OCI-LY7 (cell line): ENCODE measurements at regions of chr3 and their contacts with region 1.

Region 1: GRCh38 chr3:187902041-187902471 is 156.8 kb upstream of the BCL6 start:
- DNase-seq: peak; percentile 96
- H3K4me3 ChIP-seq: peak overlapping the region; percentile 59
- H3K27ac ChIP-seq: peak overlapping the region; percentile 100
- H3K4me1 ChIP-seq: peaks cover 98% of the 10 kb centered on the region
- CTCF ChIP-seq: no peak

Region 2: GRCh38 chr3:187000711-187001151 is 901.3 kb before region 1 on chr3:
- CTCF ChIA-PET with region 1: no interaction called
- POLR2A ChIA-PET with region 1: no interaction called
- intact Hi-C with region 1: loop called (anchors 5 kb)
- DNase-seq: peak; percentile 92
- H3K4me3 ChIP-seq: peak overlapping the region; percentile 77
- H3K27ac ChIP-seq: peak overlapping the region; percentile 98
- H3K4me1 ChIP-seq: peaks cover 72% of the 10 kb centered on the region
- CTCF ChIP-seq: no peak

Region 3: DNA sequence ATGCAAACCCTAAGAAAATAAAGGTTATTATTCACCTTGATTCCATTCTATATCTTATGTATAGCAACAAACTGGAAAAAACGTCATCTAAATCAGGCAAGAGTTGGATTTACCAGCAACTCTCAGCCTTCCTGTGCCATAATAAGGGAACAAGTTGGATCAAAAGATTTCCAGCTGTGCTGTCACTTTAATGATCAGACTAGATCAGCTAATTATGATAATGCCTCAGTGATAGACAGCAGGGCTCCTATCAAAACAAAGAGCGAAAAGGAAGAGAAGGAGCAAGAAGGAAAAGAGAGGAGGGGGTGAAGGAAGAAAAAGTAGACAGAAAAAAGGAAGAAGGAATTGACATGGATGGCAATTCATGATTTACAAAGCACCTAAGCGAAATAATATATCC is 120.0 kb before region 1 on chr3:
- CTCF ChIA-PET with region 1: no interaction called
- POLR2A ChIA-PET with region 1: no interaction called
- intact Hi-C with region 1: no loop called
- DNase-seq: no peak
- H3K4me3 ChIP-seq: no peak overlapping the region
- H3K27ac ChIP-seq: no peak overlapping the region
- H3K4me1 ChIP-seq: peaks cover 10% of the 10 kb centered on the region
- CTCF ChIP-seq: no peak

Region 4: DNA sequence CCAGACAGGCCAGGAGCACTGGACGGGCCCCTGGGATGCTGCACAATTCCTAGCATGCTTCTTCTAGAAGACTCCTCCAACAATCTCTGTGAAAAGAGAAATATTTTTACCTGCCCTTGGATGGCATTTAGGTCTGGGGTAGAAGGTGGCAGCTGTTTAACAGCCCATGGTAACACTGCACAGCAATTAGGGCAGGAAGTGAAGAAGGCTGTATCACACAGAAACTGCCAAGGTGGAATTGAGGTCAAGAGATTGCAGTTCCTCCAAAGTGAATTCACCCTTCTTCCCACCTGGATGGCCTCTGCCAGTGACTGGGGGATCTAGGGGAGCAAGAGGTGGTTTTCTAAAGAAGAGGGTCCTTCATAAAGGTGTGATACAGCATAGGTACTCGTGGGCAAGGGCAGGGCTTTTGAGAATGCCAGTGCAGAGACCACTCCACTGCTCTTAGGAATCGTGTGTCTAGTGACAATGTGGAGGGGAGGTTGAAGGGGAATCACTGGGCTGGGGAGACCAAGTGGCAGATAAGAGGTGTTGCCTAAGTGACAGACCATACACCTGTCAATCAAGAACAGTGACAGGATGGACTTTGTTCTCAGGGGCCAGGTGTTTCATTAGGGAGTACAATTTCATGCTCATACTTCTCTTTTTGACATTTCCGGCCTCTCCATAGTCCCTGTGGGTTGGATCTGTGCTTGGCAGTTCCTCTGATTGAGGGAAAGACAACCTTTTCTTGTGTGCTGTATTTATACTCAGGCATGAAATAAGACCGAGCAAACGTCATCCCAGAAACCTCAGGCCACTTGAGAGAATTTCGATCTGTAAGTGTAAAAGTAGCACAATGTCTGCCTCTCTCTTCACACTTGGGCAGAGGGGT is 73.2 kb before region 1 on chr3:
- CTCF ChIA-PET with region 1: no interaction called
- POLR2A ChIA-PET with region 1: no interaction called
- intact Hi-C with region 1: no loop called
- DNase-seq: peak; percentile 89
- H3K4me3 ChIP-seq: peak overlapping the region; percentile 30
- H3K27ac ChIP-seq: peak overlapping the region; percentile 72
- H3K4me1 ChIP-seq: peaks cover 31% of the 10 kb centered on the region
- CTCF ChIP-seq: no peak

Region 5: DNA sequence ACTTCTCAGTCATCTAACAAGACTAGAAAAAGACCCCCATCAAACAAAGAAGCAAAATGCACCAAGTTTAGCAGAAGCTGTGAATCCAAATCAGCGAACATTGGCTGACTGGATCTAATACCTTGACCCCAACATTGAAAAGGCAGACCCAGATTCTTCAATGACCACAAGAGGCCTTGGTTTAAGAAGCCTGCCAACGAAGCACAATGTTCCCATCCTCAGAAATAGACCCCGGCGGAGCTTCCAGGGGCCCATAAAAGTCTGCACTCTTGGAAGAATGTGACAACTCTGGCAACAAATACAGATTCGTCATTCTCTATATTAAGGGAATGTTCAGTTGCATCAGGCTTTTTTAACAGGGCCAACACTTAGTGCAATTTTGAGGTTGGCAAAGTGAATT is 44.0 kb before region 1 on chr3:
- CTCF ChIA-PET with region 1: no interaction called
- POLR2A ChIA-PET with region 1: no interaction called
- intact Hi-C with region 1: no loop called
- DNase-seq: no peak
- H3K4me3 ChIP-seq: no peak overlapping the region
- H3K27ac ChIP-seq: no peak overlapping the region
- H3K4me1 ChIP-seq: no peaks in the 10 kb centered on the region
- CTCF ChIP-seq: no peak

Region 6: GRCh38 chr3:187889601-187890404 is 12.3 kb before region 1 on chr3:
- CTCF ChIA-PET with region 1: no interaction called
- POLR2A ChIA-PET with region 1: interaction called, 15 read pairs
- intact Hi-C with region 1: no loop called
- DNase-seq: peak; percentile 36
- H3K4me3 ChIP-seq: no peak overlapping the region
- H3K27ac ChIP-seq: no peak overlapping the region
- H3K4me1 ChIP-seq: peaks cover 8% of the 10 kb centered on the region
- CTCF ChIP-seq: no peak

Region 7: GRCh38 chr3:187919048-187919447 is 17.0 kb after region 1 on chr3:
- CTCF ChIA-PET with region 1: interaction called, 10 read pairs
- POLR2A ChIA-PET with region 1: interaction called, 136 read pairs
- intact Hi-C with region 1: loop called (anchors 1 kb)
- DNase-seq: peak; percentile 93
- H3K4me3 ChIP-seq: peak overlapping the region; percentile 55
- H3K27ac ChIP-seq: peak overlapping the region; percentile 97
- H3K4me1 ChIP-seq: peaks cover 99% of the 10 kb centered on the region
- CTCF ChIP-seq: no peak

Region 8: GRCh38 chr3:187935623-187936156 is 33.6 kb after region 1 on chr3:
- CTCF ChIA-PET with region 1: interaction called, 13 read pairs
- POLR2A ChIA-PET with region 1: interaction called, 476 read pairs
- intact Hi-C with region 1: no loop called
- DNase-seq: peak; percentile 91
- H3K4me3 ChIP-seq: peak overlapping the region; percentile 25
- H3K27ac ChIP-seq: peak overlapping the region; percentile 99
- H3K4me1 ChIP-seq: peaks cover 100% of the 10 kb centered on the region
- CTCF ChIP-seq: no peak

Region 9: DNA sequence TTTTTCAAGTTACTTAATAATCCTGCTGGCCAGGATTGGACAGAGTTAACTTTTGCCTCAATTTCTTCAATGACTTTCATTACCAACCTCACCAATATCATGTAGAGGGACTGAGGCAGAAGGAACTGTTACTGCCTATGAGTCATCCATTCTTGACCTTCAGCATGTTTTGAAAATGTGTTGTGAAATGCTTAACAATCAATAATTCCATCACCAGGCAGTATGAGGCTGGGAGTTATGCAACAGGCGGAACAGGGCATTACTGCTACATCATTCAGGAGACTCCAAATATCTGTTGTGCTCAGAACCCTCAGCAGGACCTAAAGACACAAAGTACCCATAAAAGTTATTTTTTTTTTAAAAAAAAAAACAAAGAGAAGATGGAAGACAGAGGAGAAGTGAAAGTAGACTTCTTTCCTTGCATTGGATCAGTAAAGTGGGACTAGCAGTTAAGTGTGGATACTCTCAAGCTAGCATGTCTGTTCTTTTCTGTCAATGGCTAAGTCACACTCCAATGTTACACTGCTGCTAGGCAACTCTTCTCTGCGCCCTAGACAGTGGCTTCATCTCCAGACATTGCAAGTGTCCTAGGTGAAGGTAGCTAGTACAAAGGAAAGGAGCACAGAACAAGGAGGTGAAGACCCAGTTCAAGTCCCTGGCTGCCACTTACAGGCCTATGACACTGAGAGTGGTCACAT is 67.0 kb after region 1 on chr3:
- CTCF ChIA-PET with region 1: interaction called, 3 read pairs
- POLR2A ChIA-PET with region 1: interaction called, 305 read pairs
- intact Hi-C with region 1: loop called (anchors 1 kb)
- DNase-seq: no peak
- H3K4me3 ChIP-seq: peak overlapping the region; percentile 41
- H3K27ac ChIP-seq: peak overlapping the region; percentile 99
- H3K4me1 ChIP-seq: peaks cover 99% of the 10 kb centered on the region
- CTCF ChIP-seq: no peak; the same call in 1 of the 2 replicates

Region 10: DNA sequence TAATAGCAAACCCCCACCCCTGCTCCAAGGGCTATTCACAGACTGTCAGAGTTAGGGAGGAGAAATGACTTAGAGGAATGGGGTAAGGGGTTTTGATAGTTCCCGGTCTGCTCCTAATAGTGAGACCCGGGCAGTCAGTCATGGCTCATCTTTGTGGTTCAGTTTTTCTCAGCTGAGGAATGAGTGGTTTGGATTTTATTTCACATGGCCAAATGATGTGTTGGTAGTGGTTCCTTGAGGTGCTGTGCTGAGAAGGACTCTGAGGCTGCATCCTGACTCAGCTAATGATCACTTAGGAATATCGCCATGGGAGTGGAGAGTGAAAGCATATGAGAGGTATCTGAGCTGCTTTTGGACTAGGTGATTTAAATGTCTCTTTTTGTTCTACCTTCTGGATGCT is 332.1 kb after region 1 on chr3:
- CTCF ChIA-PET with region 1: no interaction called
- POLR2A ChIA-PET with region 1: interaction called, 3 read pairs
- intact Hi-C with region 1: loop called (anchors 1 kb)
- DNase-seq: no peak
- H3K4me3 ChIP-seq: no peak overlapping the region
- H3K27ac ChIP-seq: no peak overlapping the region
- H3K4me1 ChIP-seq: peaks cover 77% of the 10 kb centered on the region
- CTCF ChIP-seq: no peak

Region 11: DNA sequence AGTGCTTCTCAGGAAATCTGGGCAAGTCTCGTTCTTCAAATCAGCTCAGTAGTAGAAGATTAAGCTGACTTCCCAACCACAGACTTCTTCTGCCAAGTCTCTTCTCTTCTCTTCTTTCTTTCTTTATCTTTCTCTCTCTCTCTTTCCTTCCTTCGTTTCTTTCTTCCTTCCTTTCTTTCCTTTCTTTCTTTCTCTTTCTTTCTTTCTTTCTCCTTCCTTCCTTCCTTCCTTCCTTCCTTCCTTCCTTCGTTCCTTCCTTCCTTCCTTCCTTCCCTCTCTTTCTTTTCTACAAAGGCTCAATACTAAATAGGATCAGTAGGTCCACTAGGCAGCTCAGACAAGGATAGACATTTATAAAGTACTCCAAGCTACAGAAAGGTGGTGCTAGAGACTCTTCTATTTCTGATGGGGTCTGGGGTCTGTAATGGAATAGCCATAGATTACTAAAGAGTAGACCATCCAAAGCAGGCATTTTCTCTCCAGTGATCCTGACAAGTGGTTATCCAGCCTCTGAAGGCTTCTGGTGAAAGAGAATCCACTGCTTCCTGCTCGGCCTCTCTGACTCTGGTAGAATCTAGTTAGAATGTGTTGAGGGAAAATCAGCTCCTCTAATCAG is 1370.6 kb after region 1 on chr3:
- CTCF ChIA-PET with region 1: no interaction called
- POLR2A ChIA-PET with region 1: no interaction called
- intact Hi-C with region 1: no loop called
- DNase-seq: peak; percentile 48
- H3K4me3 ChIP-seq: no peak overlapping the region
- H3K27ac ChIP-seq: no peak overlapping the region
- H3K4me1 ChIP-seq: peaks cover 9% of the 10 kb centered on the region
- CTCF ChIP-seq: peak; percentile 87